ENCODE measurements at regions of chr1 and their contacts with region 1.

Region 1: GRCh38 chr1:182381962-182382819 is 9.4 kb downstream of the GLUL start:
- DNase-seq: no peak
- H3K4me3 ChIP-seq: no peak overlapping the region
- H3K27ac ChIP-seq: no peak overlapping the region
- H3K4me1 ChIP-seq: no peaks in the 10 kb centered on the region
- H3K27me3 ChIP-seq: no peaks in the 10 kb centered on the region
- CTCF ChIP-seq: no peak
- EP300 ChIP-seq: no peak
- POLR2A ChIP-seq: peak in 1 of 2 experiments; percentile 72; a peak in 2 of 3 replicates
- RAD21 ChIP-seq: no peak

Region 2: GRCh38 chr1:182357913-182358312 is 24.3 kb before region 1 on chr1:
- CTCF ChIA-PET with region 1: interaction called, 8 read pairs
- POLR2A ChIA-PET with region 1: interaction called, 13 read pairs
- DNase-seq: no peak
- H3K4me3 ChIP-seq: no peak overlapping the region
- H3K27ac ChIP-seq: no peak overlapping the region
- H3K4me1 ChIP-seq: peaks cover 2 to 18% (median 9%) of the 10 kb centered on the region in 4 experiments; a peak in 5 of 7 replicates
- H3K27me3 ChIP-seq: no peaks in the 10 kb centered on the region
- CTCF ChIP-seq: no peak
- EP300 ChIP-seq: no peak
- POLR2A ChIP-seq: no peak
- RAD21 ChIP-seq: no peak

Region 3: DNA sequence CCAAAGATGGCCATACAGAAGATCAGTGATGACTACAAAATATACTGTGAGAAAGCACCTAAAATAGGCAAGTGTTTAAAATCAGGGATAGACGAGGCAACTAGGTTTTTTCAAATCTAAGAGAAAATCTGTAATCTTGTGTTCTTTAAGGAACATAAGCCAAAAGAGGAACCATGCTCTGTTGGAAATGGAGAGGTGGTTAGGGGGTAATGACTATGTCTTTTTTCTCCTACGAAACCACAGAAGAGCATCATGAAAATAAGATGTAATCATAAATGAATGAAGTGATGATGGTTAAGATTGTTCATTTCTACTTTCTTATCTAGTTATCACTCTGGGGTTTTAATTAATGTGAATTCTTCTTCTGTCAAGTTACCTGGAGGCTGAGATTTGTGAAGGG is 110.9 kb after region 1 on chr1:
- CTCF ChIA-PET with region 1: no interaction called
- POLR2A ChIA-PET with region 1: no interaction called
- DNase-seq: no peak
- H3K4me3 ChIP-seq: no peak overlapping the region
- H3K27ac ChIP-seq: no peak overlapping the region
- H3K4me1 ChIP-seq: no peaks in the 10 kb centered on the region
- H3K27me3 ChIP-seq: no peaks in the 10 kb centered on the region; a peak in 1 of 7 replicates
- CTCF ChIP-seq: no peak
- EP300 ChIP-seq: no peak
- POLR2A ChIP-seq: no peak
- RAD21 ChIP-seq: no peak

Measured in H1 (cell line).